ENCODE measurements at regions of chr20 and their contacts with region 1.

Region 1: GRCh38 chr20:47317127-47317895 is 39.2 kb downstream of the ZMYND8 start:
- DNase-seq: peak; percentile 54
- H3K4me3 ChIP-seq: no peak overlapping the region
- H3K27ac ChIP-seq: peak overlapping the region; percentile 91 to 94
- H3K4me1 ChIP-seq: peaks cover 63% of the 10 kb centered on the region
- H3K27me3 ChIP-seq: no peaks in the 10 kb centered on the region
- CTCF ChIP-seq: no peak
- POLR2A ChIP-seq: no peak

Region 2: DNA sequence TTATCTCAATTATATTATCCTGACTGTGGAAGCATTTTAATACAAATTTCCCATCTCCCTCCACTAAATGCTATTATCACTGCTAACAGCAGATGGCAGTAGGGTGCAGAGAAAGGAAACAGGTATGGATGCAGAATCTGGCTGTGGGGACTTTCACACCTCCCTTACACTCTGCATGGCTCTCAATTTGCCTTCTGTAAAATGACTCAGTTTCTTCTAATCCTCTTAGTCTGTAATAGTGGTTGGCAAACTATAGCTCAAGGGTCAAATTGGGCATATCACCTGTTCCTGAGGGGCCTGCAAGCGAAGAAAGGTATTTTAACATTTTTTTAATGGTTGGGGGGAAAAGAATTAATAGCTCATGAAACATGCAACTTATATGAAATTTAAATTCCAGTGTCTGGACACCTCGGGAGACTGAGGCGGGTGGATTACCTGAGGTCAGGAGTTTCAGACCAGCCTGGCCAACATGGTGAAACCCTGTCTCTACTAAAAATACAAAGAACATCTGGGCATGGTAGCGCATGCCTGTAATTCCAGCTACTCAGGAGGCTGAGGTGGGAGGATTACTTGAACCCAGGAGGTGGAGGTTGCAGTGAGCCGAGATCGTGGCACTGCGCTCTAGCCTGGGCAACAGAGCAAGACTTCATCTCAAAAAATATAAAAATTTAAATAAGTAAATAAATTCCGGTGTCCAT is 44.3 kb before region 1 on chr20:
- intact Hi-C with region 1: loop called (anchors 5 kb)
- DNase-seq: peak; percentile 57
- H3K4me3 ChIP-seq: no peak overlapping the region
- H3K27ac ChIP-seq: peak overlapping the region in 1 of 2 donors; percentile 81
- H3K4me1 ChIP-seq: peaks cover 33% of the 10 kb centered on the region
- H3K27me3 ChIP-seq: no peaks in the 10 kb centered on the region
- CTCF ChIP-seq: peak; percentile 91 to 95 (median 93)
- POLR2A ChIP-seq: no peak

Region 3: GRCh38 chr20:47356526-47357295 is 39.4 kb after region 1 on chr20 and contains the start of gene ZMYND8:
- intact Hi-C with region 1: loop called (anchors 5 kb)
- DNase-seq: peak; percentile 95
- H3K4me3 ChIP-seq: peak within 1 kb of the TSS in 1 of 2 donors; percentile 48
- H3K27ac ChIP-seq: peak within 1 kb of the TSS; percentile 95 to 99
- H3K4me1 ChIP-seq: peaks cover 95% of the 10 kb centered on the region
- H3K27me3 ChIP-seq: no peaks in the 10 kb centered on the region
- CTCF ChIP-seq: no peak
- POLR2A ChIP-seq: no peak
- total RNA-seq, gene ZMYND8: 87.2 to 102 TPM

Region 4: GRCh38 chr20:47379433-47380150 is 62.3 kb after region 1 on chr20:
- intact Hi-C with region 1: no loop called
- DNase-seq: no peak
- H3K4me3 ChIP-seq: no peak overlapping the region
- H3K27ac ChIP-seq: no peak overlapping the region
- H3K4me1 ChIP-seq: peaks cover 7% of the 10 kb centered on the region
- H3K27me3 ChIP-seq: no peaks in the 10 kb centered on the region
- CTCF ChIP-seq: no peak
- POLR2A ChIP-seq: no peak